ENCODE measurements at regions of chr14 and their contacts with region 1.

Region 1: DNA sequence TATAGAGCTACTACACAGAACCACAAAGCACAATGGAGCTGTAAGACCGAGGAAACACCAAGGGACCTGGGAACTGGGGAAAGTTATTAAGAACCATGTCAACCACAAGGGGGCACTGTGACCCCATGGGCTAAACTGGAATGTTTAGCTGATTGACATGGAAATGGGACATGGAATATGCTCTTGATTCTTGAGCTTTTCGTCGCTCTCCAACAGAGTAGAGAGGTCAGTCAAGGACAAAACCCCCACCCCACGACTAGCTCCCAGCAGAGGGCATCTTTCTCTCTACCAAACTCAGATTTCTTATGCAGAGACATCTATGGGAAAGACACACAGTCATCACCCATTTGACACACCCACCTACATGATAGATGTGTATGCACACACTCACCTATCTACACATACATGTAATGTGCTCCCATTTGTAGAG is 10.1 kb downstream of the NDRG2 start:
- DNase-seq: peak; percentile 65
- H3K4me3 ChIP-seq: no peak overlapping the region
- H3K27ac ChIP-seq: no peak overlapping the region
- H3K27me3 ChIP-seq: peaks cover 20% of the 10 kb centered on the region
- CTCF ChIP-seq: peak; percentile 96

Region 2: DNA sequence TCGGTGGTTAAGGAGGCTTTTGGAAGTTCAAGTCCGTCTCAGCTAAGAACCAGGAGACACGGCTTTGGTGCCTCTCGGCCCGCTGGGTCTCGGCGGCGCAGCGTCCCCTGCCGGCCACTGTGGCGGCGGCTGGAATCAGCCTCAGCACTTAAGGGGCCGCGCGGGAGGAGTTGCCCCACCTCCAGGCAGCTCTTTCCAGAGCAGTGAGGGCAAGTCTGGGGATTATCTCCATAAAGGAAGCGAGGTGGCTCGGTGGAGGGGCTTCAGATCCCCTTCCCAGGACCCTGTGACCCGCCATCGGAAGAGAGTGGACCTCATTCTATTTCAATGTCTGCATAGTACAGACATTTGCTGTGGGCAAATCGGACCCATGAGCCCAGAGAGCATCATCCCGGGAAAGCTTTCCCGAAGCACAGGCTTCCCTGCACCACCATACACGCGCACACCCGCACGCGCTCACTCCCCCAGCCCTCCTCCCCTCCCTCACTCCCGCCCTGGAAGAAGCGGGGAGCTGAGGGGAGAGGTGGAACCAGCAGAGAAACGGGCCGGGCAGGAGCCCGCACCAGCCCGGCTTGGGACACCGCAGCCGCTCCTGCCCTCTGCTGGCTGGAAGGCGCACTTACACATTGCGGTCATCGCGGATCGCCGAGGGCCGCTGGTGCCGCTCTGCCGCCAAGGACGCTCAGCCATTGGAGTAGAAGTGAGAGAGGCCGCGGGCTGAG is 43.6 kb before region 1 on chr14:
- CTCF ChIA-PET with region 1: interaction called, 19 read pairs
- POLR2A ChIA-PET with region 1: no interaction called
- DNase-seq: peak; percentile 69
- H3K4me3 ChIP-seq: peak overlapping the region; percentile 69
- H3K27ac ChIP-seq: peak overlapping the region; percentile 47
- H3K27me3 ChIP-seq: peaks cover 12% of the 10 kb centered on the region
- CTCF ChIP-seq: peak; percentile 98

Region 3: DNA sequence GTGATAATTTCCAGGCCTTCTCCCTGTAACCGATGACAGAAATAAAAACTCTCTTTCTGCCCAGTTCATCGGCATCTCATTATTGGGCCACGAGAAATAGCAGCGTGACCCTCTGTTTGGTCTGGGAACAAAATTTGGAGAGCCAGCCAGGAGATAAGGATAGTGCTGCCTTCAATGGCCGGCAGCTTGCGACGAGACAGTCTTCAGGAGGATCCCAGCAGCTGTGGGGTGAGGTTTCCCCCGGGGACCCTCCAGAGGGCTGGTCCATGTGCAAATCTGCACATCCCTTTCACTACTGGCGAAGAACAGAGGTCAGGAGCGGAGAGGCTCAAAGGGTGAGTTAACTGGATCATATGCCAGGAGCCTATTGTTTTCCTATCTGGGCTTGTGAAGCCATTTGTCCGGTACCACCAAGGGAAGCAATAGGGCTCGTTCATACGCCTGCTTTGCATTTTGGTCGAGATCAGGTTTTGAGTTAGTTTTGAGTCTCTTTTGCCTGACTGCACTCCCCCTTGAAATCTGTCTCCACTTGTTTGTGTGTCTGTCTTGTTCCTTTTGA is 10.9 kb before region 1 on chr14:
- CTCF ChIA-PET with region 1: interaction called, 83 read pairs
- POLR2A ChIA-PET with region 1: no interaction called
- DNase-seq: no peak
- H3K4me3 ChIP-seq: no peak overlapping the region
- H3K27ac ChIP-seq: no peak overlapping the region
- H3K27me3 ChIP-seq: no peaks in the 10 kb centered on the region
- CTCF ChIP-seq: no peak

Region 4: GRCh38 chr14:21039585-21040369 is 25.0 kb after region 1 on chr14:
- CTCF ChIA-PET with region 1: interaction called, 170 read pairs
- POLR2A ChIA-PET with region 1: interaction called, 3 read pairs
- DNase-seq: peak; percentile 26
- H3K4me3 ChIP-seq: no peak overlapping the region
- H3K27ac ChIP-seq: no peak overlapping the region
- H3K27me3 ChIP-seq: peaks cover 28% of the 10 kb centered on the region
- CTCF ChIP-seq: peak; percentile 71

Region 5: DNA sequence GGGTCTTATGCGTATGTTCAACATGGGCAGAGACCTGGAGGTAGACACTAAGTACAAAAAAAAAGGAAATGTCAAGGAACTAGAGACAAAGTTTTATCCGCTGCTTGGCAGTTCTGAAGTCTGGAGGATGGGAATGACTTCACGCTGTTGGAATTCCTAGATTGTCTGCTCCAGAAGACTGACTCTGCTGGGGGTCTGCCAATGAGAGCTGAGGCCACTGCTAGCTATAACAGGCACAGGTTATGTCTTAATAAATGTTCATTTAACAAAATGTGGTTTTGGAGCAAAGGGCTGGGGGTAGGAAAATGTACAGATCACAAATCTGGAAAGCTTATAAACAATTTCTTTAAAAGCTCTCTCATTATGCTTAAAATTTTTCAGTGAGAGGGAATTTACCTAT is 48.7 kb after region 1 on chr14:
- CTCF ChIA-PET with region 1: interaction called, 57 read pairs
- POLR2A ChIA-PET with region 1: no interaction called
- DNase-seq: peak; percentile 54
- H3K4me3 ChIP-seq: no peak overlapping the region
- H3K27ac ChIP-seq: no peak overlapping the region
- H3K27me3 ChIP-seq: no peaks in the 10 kb centered on the region
- CTCF ChIP-seq: no peak

Region 6: DNA sequence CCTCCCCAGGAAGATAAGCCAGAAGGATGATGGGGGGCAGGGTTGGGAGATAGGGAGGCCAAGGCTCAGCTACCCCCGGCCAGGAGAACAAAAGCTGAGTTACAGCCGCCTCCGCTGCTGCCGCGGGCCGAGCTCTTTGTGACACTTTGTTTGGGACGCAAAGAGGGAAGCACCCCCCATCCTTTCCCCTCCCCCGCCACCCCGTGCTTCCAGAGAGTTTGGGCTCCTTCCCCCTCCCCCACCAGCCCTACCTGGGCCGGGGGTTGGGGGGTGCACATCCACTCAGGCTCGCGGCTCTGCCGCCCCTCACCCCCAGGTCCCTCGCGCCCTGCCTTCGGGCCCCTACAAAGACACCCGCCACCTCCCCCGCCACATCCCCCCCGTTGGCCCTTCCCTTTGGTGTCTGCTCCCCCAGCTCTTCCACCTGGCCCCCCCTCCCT is 82.9 kb after region 1 on chr14:
- CTCF ChIA-PET with region 1: interaction called, 310 read pairs
- POLR2A ChIA-PET with region 1: no interaction called
- DNase-seq: no peak
- H3K4me3 ChIP-seq: peak overlapping the region; percentile 43
- H3K27ac ChIP-seq: no peak overlapping the region
- H3K27me3 ChIP-seq: peaks cover 9% of the 10 kb centered on the region
- CTCF ChIP-seq: no peak

Measured in AG04450 (cell line).